Transverse colon (tissue), 4 donors: ENCODE measurements at regions of chr5 and their contacts with region 1.

Region 1: DNA sequence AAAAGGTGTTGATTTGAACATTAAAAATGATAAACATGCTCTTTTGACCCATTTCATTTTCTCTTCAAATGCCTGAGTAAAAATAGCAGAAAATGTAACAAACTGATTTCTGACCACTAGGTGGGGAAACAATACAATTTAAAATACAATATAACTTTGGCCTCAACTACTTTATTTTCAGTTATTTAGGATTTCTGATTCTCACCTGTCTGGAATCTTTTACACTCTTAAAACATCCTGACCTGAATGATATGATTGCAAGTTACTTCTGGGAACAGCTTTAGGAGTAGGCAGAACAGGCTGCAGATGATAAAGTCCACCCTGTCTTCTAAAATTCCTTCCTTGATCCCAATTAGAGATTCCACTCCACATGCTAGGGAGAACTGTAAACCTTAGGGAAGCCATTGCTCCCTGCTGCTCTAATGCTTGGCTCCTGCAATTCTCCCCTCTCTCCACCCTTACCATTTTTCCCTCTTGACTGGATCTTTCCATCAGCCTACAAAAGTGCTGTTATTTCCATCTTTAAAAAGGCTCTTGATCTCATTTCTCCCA is 70.3 kb downstream of the FYB1 start:
- DNase-seq: no peak
- H3K4me3 ChIP-seq: no peak overlapping the region
- H3K27ac ChIP-seq: no peak overlapping the region
- H3K4me1 ChIP-seq: no peaks in the 10 kb centered on the region
- H3K27me3 ChIP-seq: no peaks in the 10 kb centered on the region
- CTCF ChIP-seq: peak in 3 of 5 experiments; percentile 15 to 22 (median 19)
- EP300 ChIP-seq: no peak
- POLR2A ChIP-seq: no peak

Region 2: DNA sequence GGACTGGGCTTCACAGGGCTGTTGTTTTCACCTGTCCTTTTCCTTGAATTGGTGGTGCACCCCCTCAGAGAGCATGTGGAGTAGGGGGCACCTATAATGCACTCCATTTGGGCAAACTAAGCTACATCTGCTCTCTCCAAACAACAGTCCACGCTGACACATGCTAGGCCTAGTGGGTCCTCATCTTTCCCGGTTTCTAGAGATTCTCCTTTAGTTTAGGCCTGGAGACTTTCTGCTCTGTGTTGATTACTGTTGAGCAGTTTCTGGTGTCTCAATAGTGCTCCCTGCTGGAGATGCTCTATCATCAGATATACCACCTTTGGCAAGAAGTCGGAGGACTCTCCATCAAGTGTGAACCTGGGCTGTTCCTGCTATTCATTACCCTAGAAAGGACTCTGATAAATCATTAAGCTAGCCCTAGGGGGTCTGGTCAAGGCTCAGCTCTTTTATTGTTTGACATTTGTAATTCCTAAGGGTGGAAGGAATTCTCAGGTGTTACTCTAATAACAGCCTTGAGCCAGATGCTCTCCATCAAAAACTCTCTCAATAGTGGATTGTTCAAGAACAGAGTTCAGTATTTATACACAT is 134.3 kb after region 1 on chr5:
- in situ Hi-C with region 1: loop called in 1 of 4 experiments (anchors 25 kb)
- intact Hi-C with region 1: no loop called
- DNase-seq: peak; percentile 26
- H3K4me3 ChIP-seq: no peak overlapping the region
- H3K27ac ChIP-seq: no peak overlapping the region
- H3K4me1 ChIP-seq: peaks cover 0 to 7% (median 0%) of the 10 kb centered on the region in 4 donors
- H3K27me3 ChIP-seq: no peaks in the 10 kb centered on the region
- CTCF ChIP-seq: peak; percentile 56 to 76 (median 62)
- EP300 ChIP-seq: no peak
- POLR2A ChIP-seq: no peak